ENCODE measurements at regions of chr9 and their contacts with region 1.

Region 1: GRCh38 chr9:74804018-74804385 is 83.7 kb downstream of the TRPM6 start:
- DNase-seq: no peak
- ATAC-seq: no peak
- H3K4me3 ChIP-seq: no peak overlapping the region
- H3K4me3 Mint-ChIP-seq: no peak overlapping the region
- H3K27ac ChIP-seq: no peak overlapping the region
- H3K27ac Mint-ChIP-seq: no peak overlapping the region
- H3K4me1 ChIP-seq: no peaks in the 10 kb centered on the region
- H3K4me1 Mint-ChIP-seq: no peaks in the 10 kb centered on the region
- H3K27me3 ChIP-seq: peaks cover 0 to 3% of the 10 kb centered on the region in 2 experiments
- H3K27me3 Mint-ChIP-seq: peaks cover 24 to 40% of the 10 kb centered on the region in 2 donors

Region 2: GRCh38 chr9:74630228-74630627 is 173.8 kb before region 1 on chr9:
- CTCF ChIA-PET with region 1: no interaction called
- POLR2A ChIA-PET with region 1: no interaction called
- DNase-seq: no peak
- ATAC-seq: no peak
- H3K4me3 ChIP-seq: no peak overlapping the region
- H3K4me3 Mint-ChIP-seq: no peak overlapping the region
- H3K27ac ChIP-seq: no peak overlapping the region
- H3K27ac Mint-ChIP-seq: no peak overlapping the region
- H3K4me1 ChIP-seq: no peaks in the 10 kb centered on the region
- H3K4me1 Mint-ChIP-seq: no peaks in the 10 kb centered on the region
- H3K27me3 ChIP-seq: peaks cover 2% of the 10 kb centered on the region in 2 experiments
- H3K27me3 Mint-ChIP-seq: peaks cover 8 to 17% of the 10 kb centered on the region in 2 donors

Region 3: DNA sequence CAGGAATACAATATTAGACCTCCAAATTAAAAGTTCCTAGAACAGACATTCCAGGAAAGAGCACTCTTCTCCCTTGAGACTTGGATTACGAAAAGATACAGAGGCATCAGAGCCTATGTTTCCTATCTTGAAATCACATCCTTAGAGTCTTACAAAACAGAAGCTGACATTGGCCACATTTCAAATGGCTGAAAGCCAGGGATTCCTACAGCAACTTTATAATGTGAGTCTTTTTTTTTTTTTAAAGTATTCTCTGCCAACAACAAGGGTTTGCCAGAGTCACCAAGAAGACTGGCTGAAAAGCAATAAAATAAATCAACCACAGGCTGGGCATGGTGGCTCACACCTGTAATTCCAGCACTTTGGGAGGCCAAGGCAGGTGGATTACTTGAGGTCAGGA is 20.7 kb after region 1 on chr9:
- CTCF ChIA-PET with region 1: interaction called in 1 of 2 experiments, 4 read pairs
- POLR2A ChIA-PET with region 1: interaction called in 1 of 2 experiments, 16 read pairs
- DNase-seq: no peak
- ATAC-seq: no peak
- H3K4me3 ChIP-seq: no peak overlapping the region
- H3K4me3 Mint-ChIP-seq: no peak overlapping the region
- H3K27ac ChIP-seq: no peak overlapping the region
- H3K27ac Mint-ChIP-seq: no peak overlapping the region
- H3K4me1 ChIP-seq: no peaks in the 10 kb centered on the region
- H3K4me1 Mint-ChIP-seq: no peaks in the 10 kb centered on the region
- H3K27me3 ChIP-seq: no peaks in the 10 kb centered on the region
- H3K27me3 Mint-ChIP-seq: peaks cover 10 to 11% of the 10 kb centered on the region in 2 donors

Region 4: GRCh38 chr9:74875656-74876413 is 71.8 kb after region 1 on chr9:
- CTCF ChIA-PET with region 1: no interaction called
- POLR2A ChIA-PET with region 1: no interaction called
- DNase-seq: no peak
- ATAC-seq: no peak
- H3K4me3 ChIP-seq: no peak overlapping the region
- H3K4me3 Mint-ChIP-seq: no peak overlapping the region
- H3K27ac ChIP-seq: no peak overlapping the region
- H3K27ac Mint-ChIP-seq: no peak overlapping the region
- H3K4me1 ChIP-seq: no peaks in the 10 kb centered on the region
- H3K4me1 Mint-ChIP-seq: no peaks in the 10 kb centered on the region
- H3K27me3 ChIP-seq: peaks cover 0 to 13% of the 10 kb centered on the region in 2 experiments
- H3K27me3 Mint-ChIP-seq: peaks cover 16 to 23% of the 10 kb centered on the region in 2 donors